ENCODE measurements at regions of chr5 and their contacts with region 1.

Region 1: GRCh38 chr5:139968547-139969261 is 74.4 kb downstream of the NRG2 start:
- DNase-seq: peak; percentile 89
- H3K4me3 Mint-ChIP-seq: no peak overlapping the region
- H3K27ac Mint-ChIP-seq: no peak overlapping the region
- H3K4me1 Mint-ChIP-seq: no peaks in the 10 kb centered on the region
- H3K27me3 Mint-ChIP-seq: no peaks in the 10 kb centered on the region
- CTCF ChIP-seq: peak; percentile 100

Region 2: DNA sequence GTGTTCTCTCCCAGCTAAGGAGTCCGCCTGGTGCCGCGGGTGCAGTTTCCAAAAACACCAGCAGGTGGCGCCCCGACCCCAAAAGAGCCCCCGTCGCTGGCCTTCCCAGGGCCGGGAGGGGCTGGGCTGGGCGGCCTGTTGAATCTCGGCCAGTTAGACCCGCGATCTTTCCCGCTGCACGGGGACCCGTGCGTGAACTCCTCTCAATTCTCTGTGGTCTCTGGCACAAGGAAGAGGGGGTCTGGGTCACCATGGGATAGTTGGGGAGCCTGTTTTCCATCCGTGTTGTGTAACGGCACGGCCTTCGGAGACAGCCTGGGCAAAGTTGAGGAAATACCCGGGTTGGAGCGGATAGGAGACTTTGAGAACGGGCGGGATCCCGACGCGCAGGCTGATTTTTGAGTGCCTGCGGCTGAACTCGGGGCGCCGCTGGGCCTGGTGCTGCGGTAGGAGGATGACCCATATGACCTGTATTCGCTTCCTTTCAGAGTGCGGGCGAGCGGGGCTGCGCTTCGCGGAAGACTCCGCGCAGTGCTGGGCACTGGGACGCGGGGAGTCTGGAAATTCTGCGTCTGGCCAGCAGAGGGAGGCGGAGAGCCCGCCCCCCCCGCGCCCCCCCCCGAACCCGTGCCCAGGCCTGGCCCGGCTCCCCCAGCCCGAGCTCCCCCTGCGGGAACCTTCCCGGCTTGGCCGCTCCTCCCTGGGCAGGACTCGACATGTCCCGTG is 181.0 kb before region 1 on chr5:
- CTCF ChIA-PET with region 1: interaction called, 774 read pairs
- POLR2A ChIA-PET with region 1: interaction called, 44 read pairs
- intact Hi-C with region 1: loop called (anchors 1 kb)
- DNase-seq: peak; percentile 86
- H3K4me3 Mint-ChIP-seq: peak overlapping the region; percentile 78
- H3K27ac Mint-ChIP-seq: peak overlapping the region; percentile 47
- H3K4me1 Mint-ChIP-seq: no peaks in the 10 kb centered on the region
- H3K27me3 Mint-ChIP-seq: peaks cover 38% of the 10 kb centered on the region
- CTCF ChIP-seq: peak; percentile 100

Region 3: DNA sequence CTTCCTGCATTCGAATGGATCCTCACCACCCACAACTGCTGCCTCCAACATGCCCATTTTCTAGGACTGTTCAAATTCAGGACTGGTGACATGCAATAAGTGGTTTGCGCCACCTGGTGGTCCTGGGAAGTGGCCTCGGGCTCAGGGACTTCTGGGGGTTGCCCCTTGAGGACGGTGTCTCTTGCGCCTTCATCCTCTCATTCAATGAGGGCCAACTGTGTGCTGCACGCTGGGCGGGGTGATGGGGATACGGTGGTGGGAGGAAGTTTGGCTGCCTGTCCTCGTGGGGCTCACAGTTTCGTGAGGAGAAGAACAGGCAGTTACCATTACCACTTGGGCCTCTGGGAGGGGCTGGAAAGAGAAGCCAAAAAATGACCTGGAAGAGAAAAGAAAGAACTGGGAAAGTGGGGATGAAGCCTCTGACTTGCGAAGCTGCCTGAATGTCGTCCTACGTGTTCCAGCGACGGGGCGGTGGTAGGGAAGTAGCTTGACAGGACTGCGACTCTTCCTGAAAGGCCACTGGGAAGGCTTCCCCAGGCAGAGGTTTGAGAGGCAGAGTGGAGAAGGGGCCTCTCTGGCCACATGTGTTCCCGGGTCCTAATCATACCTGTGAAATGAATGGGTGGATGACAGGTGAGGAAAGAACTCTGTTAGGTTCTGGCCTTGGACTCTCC is 124.1 kb before region 1 on chr5:
- CTCF ChIA-PET with region 1: interaction called, 54 read pairs
- POLR2A ChIA-PET with region 1: no interaction called
- intact Hi-C with region 1: loop called (anchors 1 kb)
- DNase-seq: peak; percentile 82
- H3K4me3 Mint-ChIP-seq: no peak overlapping the region
- H3K27ac Mint-ChIP-seq: no peak overlapping the region
- H3K4me1 Mint-ChIP-seq: peaks cover 3% of the 10 kb centered on the region
- H3K27me3 Mint-ChIP-seq: peaks cover 37% of the 10 kb centered on the region
- CTCF ChIP-seq: peak; percentile 74

Region 4: DNA sequence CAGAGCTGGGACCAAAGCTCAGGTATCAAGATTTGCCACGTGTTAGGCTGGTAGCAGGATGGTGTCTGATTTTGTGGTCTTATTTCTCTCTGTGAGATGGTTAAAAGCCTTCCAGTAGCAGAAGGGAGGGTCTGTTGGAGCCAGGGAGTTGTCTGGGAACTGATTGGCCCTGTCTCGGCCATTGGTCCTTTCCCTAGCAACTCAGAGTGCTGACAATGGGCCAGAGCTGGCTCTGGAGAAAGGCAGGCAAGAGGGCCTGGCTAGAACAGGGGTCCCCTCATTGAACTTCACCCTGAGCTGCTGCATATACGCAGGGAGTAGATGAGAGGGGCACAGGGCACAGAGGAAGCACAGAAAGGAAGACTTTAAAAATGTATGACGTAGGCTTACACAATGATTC is 80.3 kb before region 1 on chr5:
- CTCF ChIA-PET with region 1: interaction called, 25 read pairs
- POLR2A ChIA-PET with region 1: no interaction called
- intact Hi-C with region 1: no loop called
- DNase-seq: no peak
- H3K4me3 Mint-ChIP-seq: no peak overlapping the region
- H3K27ac Mint-ChIP-seq: no peak overlapping the region
- H3K4me1 Mint-ChIP-seq: no peaks in the 10 kb centered on the region
- H3K27me3 Mint-ChIP-seq: peaks cover 22% of the 10 kb centered on the region
- CTCF ChIP-seq: no peak

Region 5: DNA sequence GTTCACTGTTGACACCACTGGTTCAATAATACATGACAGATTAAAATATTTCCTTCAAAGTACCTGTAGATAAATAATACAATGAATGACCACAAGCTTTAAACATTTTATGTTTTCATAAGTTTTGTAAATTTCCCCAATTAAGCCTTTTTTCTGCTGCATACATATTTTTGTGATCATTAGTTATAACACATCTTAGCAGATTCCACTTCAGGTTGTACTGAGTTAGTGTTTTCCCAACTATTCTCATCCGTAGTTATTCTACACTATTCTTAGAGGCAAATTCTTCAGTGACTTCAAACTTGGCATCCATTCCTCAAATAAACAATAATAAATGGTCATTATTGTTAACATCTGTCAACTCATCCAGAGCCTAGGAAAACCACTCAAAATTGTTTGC is 26.5 kb before region 1 on chr5:
- CTCF ChIA-PET with region 1: interaction called, 198 read pairs
- POLR2A ChIA-PET with region 1: no interaction called
- intact Hi-C with region 1: no loop called
- DNase-seq: no peak
- H3K4me3 Mint-ChIP-seq: no peak overlapping the region
- H3K27ac Mint-ChIP-seq: no peak overlapping the region
- H3K4me1 Mint-ChIP-seq: no peaks in the 10 kb centered on the region
- H3K27me3 Mint-ChIP-seq: peaks cover 87% of the 10 kb centered on the region
- CTCF ChIP-seq: no peak

Region 6: DNA sequence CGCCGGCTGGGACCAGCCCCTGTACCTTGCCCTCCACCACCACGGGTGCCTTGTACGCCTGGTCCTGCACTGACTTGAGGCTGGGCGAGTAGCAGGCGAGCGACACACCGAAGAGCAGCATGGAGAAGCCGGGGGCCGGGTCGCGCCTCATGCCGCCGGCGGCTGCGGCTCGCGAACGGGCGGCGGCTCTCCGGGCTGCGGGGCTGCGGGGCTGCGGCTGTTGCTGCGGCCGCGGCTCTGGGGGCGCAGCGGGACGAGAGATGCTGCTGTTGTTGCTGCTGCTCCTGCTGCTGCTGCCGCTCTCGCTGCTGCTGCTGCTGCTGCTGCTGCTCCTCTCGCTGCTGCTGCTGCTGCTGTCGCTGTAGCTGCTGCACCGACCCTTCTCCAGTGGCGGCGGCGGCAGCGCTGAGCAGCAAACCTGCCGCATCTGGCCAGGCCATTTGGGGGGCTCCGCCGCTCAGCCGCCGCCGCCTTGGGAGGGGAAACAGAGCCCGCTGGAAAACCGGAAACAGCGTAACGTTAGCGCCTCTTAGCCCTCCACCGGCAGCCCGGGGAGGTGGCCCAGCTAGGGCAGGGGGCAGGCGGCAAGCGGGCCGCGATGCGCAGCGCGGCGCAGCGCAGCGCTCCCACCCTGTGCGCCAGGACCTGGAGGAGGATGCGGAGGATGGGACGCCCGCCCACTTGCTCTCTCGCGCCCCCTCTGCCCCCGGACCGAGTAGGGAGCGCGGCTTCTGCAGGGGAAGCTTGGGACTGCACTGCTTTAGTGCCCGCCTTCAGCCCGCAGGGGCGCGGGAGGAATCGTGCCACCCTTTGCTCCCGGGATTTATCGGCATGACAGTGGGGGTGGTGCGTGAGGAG is 74.2 kb after region 1 on chr5 and contains the start of gene NRG2:
- CTCF ChIA-PET with region 1: interaction called, 30 read pairs
- POLR2A ChIA-PET with region 1: interaction called, 7 read pairs
- intact Hi-C with region 1: loop called (anchors 2 kb)
- DNase-seq: peak; percentile 63
- H3K4me3 Mint-ChIP-seq: peak within 1 kb of the TSS; percentile 69
- H3K27ac Mint-ChIP-seq: no peak within 1 kb of the TSS
- H3K4me1 Mint-ChIP-seq: peaks cover 32% of the 10 kb centered on the region
- H3K27me3 Mint-ChIP-seq: peaks cover 23% of the 10 kb centered on the region
- CTCF ChIP-seq: peak; percentile 57
- total RNA-seq, gene NRG2: 0.23 TPM in 1 of 2 replicates, not detected in the other